Aorta (tissue), 5 donors: ENCODE measurements at regions of chr9 and their contacts with region 1.

Region 1: GRCh38 chr9:32431940-32432555 is 47.6 kb downstream of the ACO1 start:
- DNase-seq: no peak
- ATAC-seq: peak; percentile 74
- H3K4me3 ChIP-seq: no peak overlapping the region
- H3K27ac ChIP-seq: no peak overlapping the region
- H3K4me1 ChIP-seq: no peaks in the 10 kb centered on the region
- H3K27me3 ChIP-seq: no peaks in the 10 kb centered on the region

Region 2: GRCh38 chr9:32378993-32379729 is 52.9 kb before region 1 on chr9:
- intact Hi-C with region 1: loop called (anchors 5 kb)
- DNase-seq: no peak
- ATAC-seq: peak; percentile 92
- H3K4me3 ChIP-seq: no peak overlapping the region
- H3K27ac ChIP-seq: no peak overlapping the region
- H3K4me1 ChIP-seq: no peaks in the 10 kb centered on the region
- H3K27me3 ChIP-seq: no peaks in the 10 kb centered on the region

Region 3: GRCh38 chr9:32384364-32385151 is 47.5 kb before region 1 on chr9 and contains the start of gene ACO1:
- intact Hi-C with region 1: loop called (anchors 5 kb)
- DNase-seq: peak; percentile 94 to 97
- ATAC-seq: peak; percentile 98
- H3K4me3 ChIP-seq: peak within 1 kb of the TSS; percentile 46 to 47
- H3K27ac ChIP-seq: peak within 1 kb of the TSS in 1 of 2 donors; percentile 65
- H3K4me1 ChIP-seq: no peaks in the 10 kb centered on the region
- H3K27me3 ChIP-seq: no peaks in the 10 kb centered on the region
- total RNA-seq, gene ACO1: 29.4 to 30.5 TPM

Region 4: DNA sequence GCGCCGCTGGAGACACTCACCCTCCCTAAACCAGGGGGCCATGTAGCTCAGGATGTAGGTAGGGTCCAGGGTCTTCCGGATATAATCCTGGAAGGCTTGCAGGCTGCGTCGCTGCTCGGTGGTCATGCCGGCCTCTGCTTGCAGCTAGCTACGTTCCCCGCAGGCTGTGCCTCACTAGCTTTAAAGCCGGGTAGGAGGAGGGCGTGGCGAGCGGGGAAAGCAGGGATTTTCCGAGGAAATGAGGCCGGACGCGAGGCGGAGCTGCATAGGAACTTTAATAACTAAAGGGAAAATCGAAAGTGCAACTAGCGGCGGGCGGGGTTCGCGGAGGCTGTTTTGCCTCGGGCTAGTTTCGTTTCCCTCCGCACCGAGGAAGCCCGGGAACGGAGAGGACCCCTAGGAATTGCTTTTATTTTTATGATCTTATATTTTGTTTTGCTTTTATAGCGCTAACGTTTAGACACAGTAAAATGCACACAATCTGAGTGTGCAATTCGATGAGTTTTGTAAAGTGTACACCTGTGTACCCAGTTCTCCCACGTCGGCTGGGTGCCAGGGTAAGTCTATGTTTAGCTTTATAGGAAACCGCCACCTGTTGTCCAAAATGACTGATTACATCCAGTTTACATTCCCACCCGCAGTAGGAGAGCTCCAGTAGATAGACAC is 94.1 kb after region 1 on chr9 and contains the start of gene RIGI:
- intact Hi-C with region 1: loop called in 1 of 2 experiments (anchors 10 kb)
- DNase-seq: peak; percentile 97 to 98
- ATAC-seq: peak; percentile 95
- H3K4me3 ChIP-seq: peak within 1 kb of the TSS; percentile 78 to 99
- H3K27ac ChIP-seq: peak within 1 kb of the TSS in 1 of 2 donors; percentile 88
- H3K4me1 ChIP-seq: peaks cover 2 to 4% of the 10 kb centered on the region in 2 donors
- H3K27me3 ChIP-seq: no peaks in the 10 kb centered on the region
- total RNA-seq, gene RIGI: 13.0 to 15.6 TPM

Region 5: GRCh38 chr9:32748013-32748412 is 316.0 kb after region 1 on chr9:
- intact Hi-C with region 1: no loop called
- DNase-seq: no peak
- ATAC-seq: no peak
- H3K4me3 ChIP-seq: no peak overlapping the region
- H3K27ac ChIP-seq: no peak overlapping the region
- H3K4me1 ChIP-seq: no peaks in the 10 kb centered on the region
- H3K27me3 ChIP-seq: no peaks in the 10 kb centered on the region